Cardiac septum (tissue), 1 donor: ENCODE measurements at regions of chr10 and their contacts with region 1.

Region 1: GRCh38 chr10:113808168-113808567 is 45.7 kb downstream of the DCLRE1A start:
- DNase-seq: no peak

Region 2: GRCh38 chr10:113980407-113981087 is 172.4 kb after region 1 on chr10:
- intact Hi-C with region 1: no loop called
- DNase-seq: no peak

Region 3: GRCh38 chr10:114087255-114087654 is 279.1 kb after region 1 on chr10:
- intact Hi-C with region 1: loop called (anchors 5 kb)
- DNase-seq: no peak